ENCODE measurements at regions of chr11 and their contacts with region 1.

Region 1: GRCh38 chr11:64742889-64743590 is 902 bp downstream of the RASGRP2 start:
- DNase-seq: peak; percentile 74
- H3K4me3 Mint-ChIP-seq: no peak overlapping the region
- H3K27ac Mint-ChIP-seq: no peak overlapping the region
- H3K4me1 Mint-ChIP-seq: peaks cover 27% of the 10 kb centered on the region
- H3K27me3 Mint-ChIP-seq: no peaks in the 10 kb centered on the region

Region 2: DNA sequence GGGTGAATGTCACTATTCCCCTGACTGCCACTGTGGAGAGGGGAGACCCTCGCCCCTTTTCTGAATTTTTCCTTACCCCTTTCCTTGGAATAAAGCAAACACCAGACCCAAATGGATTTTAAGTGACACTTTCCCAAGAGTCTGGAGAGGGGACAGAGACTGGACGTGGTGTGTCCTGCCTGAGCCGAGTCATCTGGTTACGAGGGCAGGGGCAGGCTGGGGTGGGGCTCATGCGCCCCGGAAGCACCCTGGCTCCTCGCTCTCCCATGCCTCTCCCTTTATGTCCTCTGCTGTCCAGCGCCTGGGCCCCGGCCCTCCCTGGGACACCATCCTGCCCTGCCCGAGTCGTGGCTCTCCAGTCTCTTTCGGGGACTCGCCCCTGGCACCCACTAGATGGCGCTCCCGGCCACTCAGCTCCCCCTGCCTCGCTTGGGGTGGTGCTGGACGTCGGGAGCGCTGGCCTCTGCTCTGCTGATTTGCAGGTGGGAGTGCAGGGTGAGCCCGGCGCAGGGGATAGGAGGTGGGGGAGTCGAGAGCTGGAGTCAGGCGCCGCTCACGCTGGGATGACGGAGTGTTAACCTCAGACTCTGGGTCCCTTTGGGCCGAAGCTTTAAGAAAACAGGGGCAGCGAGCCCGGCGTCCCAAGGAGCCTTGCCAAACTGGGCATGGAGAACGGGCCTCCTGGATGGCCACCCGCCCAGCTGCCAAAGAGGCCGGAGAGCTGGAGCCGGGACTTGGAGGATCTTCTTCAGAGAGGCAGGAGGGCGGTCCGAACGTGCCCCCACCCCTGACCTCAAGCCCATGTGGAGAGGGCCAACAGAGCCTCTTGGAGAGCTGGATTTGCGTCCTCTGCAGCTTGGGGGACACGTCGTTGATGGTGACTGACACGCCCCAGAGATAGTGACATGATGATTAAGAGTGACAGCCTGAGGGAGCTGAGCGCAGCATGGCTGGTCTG is 294.2 kb before region 1 on chr11:
- intact Hi-C with region 1: no loop called
- DNase-seq: peak; percentile 53
- H3K4me3 Mint-ChIP-seq: peak overlapping the region; percentile 77
- H3K27ac Mint-ChIP-seq: no peak overlapping the region
- H3K4me1 Mint-ChIP-seq: peaks cover 21% of the 10 kb centered on the region
- H3K27me3 Mint-ChIP-seq: peaks cover 20% of the 10 kb centered on the region

Region 3: DNA sequence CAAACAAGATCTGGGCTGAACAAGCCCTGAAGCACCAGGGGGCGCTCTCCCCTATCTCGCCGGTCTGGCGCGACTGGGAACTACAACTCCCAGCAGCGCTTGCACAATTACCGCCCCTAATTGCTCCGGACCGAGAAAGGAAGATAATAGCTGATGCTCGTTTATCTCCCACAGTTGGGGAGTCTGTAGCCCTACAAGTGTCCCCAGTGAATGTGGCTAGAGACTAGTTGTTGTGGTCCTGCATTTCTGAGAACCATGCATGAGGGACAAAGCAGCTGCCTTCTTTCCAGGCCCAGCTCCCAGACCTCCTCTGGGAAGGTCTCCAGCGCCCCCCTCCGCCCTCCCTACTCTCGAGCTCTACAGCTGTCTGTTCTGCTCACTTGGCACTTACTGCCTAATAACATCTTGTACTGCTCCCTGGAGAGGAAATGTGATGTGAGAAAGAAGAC is 54.5 kb before region 1 on chr11:
- intact Hi-C with region 1: loop called (anchors 1 kb)
- DNase-seq: peak; percentile 82
- H3K4me3 Mint-ChIP-seq: no peak overlapping the region
- H3K27ac Mint-ChIP-seq: no peak overlapping the region
- H3K4me1 Mint-ChIP-seq: peaks cover 23% of the 10 kb centered on the region
- H3K27me3 Mint-ChIP-seq: peaks cover 20% of the 10 kb centered on the region

Region 4: DNA sequence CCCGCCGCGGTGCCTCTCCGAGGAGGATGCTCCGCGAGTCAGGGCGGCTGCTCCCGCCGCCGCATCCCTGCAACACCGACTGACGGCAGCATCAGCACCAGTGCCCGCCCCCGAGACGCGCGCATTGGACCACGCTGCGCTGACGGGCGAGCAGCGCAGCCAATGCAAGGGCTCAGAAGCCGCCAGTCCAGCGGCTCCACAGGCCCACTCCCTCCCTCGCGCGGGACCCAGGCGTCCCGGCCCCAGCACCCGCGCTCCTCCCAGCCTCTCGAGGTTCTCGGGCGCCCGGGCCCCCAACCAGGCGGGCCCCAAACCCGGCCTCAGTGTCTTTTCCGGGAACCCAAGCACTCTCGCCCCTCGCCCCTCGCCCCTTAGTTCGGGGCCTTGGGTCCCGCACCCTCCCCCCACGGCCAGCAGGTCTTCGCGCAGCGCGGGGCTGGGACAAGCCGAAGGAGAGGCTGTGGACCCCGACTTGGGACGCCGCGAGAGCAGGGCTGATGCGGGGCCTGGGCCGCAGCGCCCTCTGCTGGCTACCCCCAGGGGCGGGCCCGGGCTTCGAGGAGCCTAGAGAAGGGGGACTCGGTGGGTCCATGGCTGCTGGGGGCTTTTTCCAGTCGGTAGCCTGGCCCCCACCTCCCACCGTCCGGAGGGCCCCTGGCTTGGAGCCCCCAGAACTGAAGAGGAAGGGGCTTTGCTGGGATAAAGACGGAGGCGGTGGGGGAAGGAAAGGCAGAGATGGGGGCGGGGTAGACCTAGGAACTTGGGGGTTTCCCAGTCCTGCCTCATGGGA is 19.7 kb before region 1 on chr11 and contains the start of gene NRXN2:
- intact Hi-C with region 1: loop called (anchors 1 kb)
- DNase-seq: peak; percentile 90
- H3K4me3 Mint-ChIP-seq: peak within 1 kb of the TSS; percentile 62
- H3K27ac Mint-ChIP-seq: peak within 1 kb of the TSS; percentile 52
- H3K4me1 Mint-ChIP-seq: peaks cover 13% of the 10 kb centered on the region
- H3K27me3 Mint-ChIP-seq: peaks cover 41% of the 10 kb centered on the region
- total RNA-seq, gene NRXN2: 0.17 and 0.23 TPM in 2 replicates

Region 5: GRCh38 chr11:64767344-64768299 is 24.6 kb after region 1 on chr11:
- intact Hi-C with region 1: loop called (anchors 1 kb)
- DNase-seq: peak; percentile 71
- H3K4me3 Mint-ChIP-seq: no peak overlapping the region
- H3K27ac Mint-ChIP-seq: peak overlapping the region; percentile 21
- H3K4me1 Mint-ChIP-seq: peaks cover 86% of the 10 kb centered on the region
- H3K27me3 Mint-ChIP-seq: no peaks in the 10 kb centered on the region

Region 6: DNA sequence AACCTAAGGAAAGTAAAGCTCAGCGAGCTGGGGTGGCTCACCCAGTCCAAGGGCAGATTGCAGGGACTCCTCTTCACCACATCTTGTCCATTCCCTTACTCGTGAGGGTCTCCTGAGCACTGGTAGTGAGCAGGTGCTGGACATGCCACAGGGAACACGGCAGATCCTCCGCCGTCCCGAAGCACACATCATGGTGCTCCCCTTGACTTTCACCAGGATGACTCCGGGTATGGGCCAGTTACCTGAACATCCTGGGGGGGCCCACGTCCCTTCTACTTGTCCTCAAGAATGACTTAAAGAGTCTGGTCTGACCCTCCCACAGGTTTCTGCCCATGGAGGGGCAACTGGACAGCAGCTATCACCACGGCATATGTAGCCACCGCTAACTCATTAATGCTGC is 43.3 kb after region 1 on chr11:
- intact Hi-C with region 1: no loop called
- DNase-seq: no peak
- H3K4me3 Mint-ChIP-seq: no peak overlapping the region
- H3K27ac Mint-ChIP-seq: no peak overlapping the region
- H3K4me1 Mint-ChIP-seq: no peaks in the 10 kb centered on the region
- H3K27me3 Mint-ChIP-seq: no peaks in the 10 kb centered on the region

Region 7: DNA sequence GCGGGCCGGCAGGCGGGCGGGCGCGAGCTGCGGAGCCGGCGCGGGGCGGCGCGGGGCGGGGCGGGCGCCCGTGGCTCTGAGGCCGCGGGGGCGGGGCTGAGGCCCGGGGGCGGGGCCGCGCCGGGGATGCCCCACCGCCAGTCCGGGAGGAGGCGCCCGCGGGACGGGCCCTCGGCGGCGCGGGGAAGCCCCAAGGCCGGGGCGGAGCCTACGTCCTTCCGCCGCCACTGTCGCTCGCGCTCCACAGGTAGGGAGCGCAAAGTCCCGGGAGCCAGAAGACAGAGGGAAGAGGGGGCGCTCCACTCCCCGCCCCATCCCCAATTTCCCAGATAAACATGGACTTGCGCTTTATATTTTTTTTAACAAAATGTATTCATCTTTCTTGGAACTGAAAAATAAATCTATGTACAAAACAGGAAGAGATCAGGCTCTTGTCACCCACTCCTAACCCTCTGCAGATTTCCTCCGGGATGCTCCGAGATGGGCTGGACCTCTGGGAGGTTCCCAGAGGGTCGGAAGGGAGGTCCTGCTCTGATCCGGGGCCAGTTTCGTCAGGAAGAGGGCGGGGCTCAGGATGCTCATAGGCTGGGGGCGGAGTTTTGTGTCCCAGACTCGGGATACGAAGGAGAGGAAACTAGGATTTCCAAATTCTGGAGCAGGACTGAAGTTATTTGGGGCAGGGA is 60.3 kb after region 1 on chr11 and contains the start of gene MAP4K2:
- intact Hi-C with region 1: loop called (anchors 2 kb)
- DNase-seq: peak; percentile 89
- H3K4me3 Mint-ChIP-seq: peak within 1 kb of the TSS; percentile 88
- H3K27ac Mint-ChIP-seq: peak within 1 kb of the TSS; percentile 83
- H3K4me1 Mint-ChIP-seq: peaks cover 26% of the 10 kb centered on the region
- H3K27me3 Mint-ChIP-seq: no peaks in the 10 kb centered on the region
- total RNA-seq, gene MAP4K2: 70.2 and 70.7 TPM in 2 replicates

Region 8: DNA sequence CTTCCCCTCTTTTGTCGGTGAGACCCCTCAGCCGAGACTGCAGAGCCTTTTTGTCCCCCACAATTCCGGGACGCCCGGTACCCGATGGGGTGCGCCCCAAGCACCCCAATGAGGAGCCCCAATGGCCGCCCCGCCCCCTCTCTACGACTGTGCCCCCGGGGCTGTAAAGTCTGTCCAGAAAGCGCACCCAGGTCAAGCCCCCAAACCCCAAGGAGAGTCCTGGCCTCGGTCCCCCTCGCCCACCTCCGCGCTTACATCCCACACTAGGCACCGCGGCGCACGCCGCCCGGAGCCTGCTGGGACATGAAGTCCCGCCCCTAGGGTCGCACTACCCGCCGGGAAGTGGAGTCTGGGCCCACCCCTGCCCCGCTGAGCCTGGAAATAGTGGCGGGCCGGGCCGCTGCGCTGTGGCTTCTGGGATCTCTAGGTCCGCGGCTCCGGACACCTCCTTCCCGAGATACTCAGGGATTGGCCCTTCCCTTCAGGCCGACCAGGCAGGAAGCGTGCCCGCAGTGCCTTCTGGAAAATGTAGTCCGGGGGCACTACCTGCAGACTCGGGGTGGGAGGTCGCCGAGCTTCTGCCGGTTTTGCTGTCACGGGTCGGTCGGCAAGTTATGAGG is 67.3 kb after region 1 on chr11 and contains the start of gene MEN1:
- intact Hi-C with region 1: loop called (anchors 2 kb)
- DNase-seq: peak; percentile 67
- H3K4me3 Mint-ChIP-seq: peak within 1 kb of the TSS; percentile 95
- H3K27ac Mint-ChIP-seq: peak within 1 kb of the TSS; percentile 89
- H3K4me1 Mint-ChIP-seq: peaks cover 22% of the 10 kb centered on the region
- H3K27me3 Mint-ChIP-seq: peaks cover 5% of the 10 kb centered on the region
- total RNA-seq, gene MEN1: 39.6 and 43.8 TPM in 2 replicates